CD8-positive, alpha-beta T cell (primary cell): ENCODE measurements at regions of chr14 and their contacts with region 1.

Region 1: GRCh38 chr14:74905375-74906142 is 17.5 kb downstream of the RPS6KL1 start:
- DNase-seq: peak; percentile 58 to 89 (median 81)
- ATAC-seq: peak; percentile 82
- H3K4me3 ChIP-seq: no peak overlapping the region
- H3K4me3 Mint-ChIP-seq: no peak overlapping the region
- H3K27ac ChIP-seq: peak overlapping the region in 1 of 2 experiments; percentile 3
- H3K27ac Mint-ChIP-seq: peak overlapping the region; percentile 55
- H3K4me1 ChIP-seq: peaks cover 5% of the 10 kb centered on the region
- H3K4me1 Mint-ChIP-seq: peaks cover 7% of the 10 kb centered on the region
- H3K27me3 ChIP-seq: no peaks in the 10 kb centered on the region
- H3K27me3 Mint-ChIP-seq: no peaks in the 10 kb centered on the region
- CTCF ChIP-seq: peak; percentile 89

Region 2: DNA sequence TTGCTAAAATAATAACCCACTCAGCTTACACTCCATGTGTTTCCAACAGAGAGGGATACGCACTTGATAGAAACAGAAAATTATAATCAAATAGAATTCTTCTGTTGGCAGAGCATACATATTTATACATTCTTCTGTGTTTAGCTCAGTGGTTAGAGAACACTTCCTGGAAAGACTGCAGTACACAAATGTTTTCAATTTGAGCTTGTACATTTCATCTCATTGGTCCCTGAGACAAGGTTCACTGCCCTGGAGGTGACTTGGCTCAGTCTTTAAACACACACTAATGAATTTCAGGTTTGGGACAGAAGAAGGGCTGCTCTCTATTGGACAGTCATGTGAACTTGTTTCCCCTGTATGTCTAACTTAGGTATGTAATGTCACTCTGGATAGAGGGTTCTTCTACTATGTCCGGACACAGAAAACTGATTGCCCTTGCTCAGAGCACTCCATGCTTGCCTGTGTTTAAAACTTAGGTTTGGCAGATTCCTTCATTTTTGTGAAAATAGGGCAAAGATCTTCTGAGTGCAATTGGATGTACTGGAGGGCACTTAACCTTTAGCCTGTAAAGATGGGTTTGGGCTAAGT is 52.5 kb before region 1 on chr14:
- CTCF ChIA-PET with region 1: interaction called, 725 read pairs
- POLR2A ChIA-PET with region 1: no interaction called
- intact Hi-C with region 1: no loop called
- DNase-seq: no peak
- ATAC-seq: no peak
- H3K4me3 ChIP-seq: no peak overlapping the region
- H3K4me3 Mint-ChIP-seq: no peak overlapping the region
- H3K27ac ChIP-seq: no peak overlapping the region
- H3K27ac Mint-ChIP-seq: peak overlapping the region; percentile 15
- H3K4me1 ChIP-seq: peaks cover 16% of the 10 kb centered on the region
- H3K4me1 Mint-ChIP-seq: peaks cover 24% of the 10 kb centered on the region
- H3K27me3 ChIP-seq: no peaks in the 10 kb centered on the region
- H3K27me3 Mint-ChIP-seq: no peaks in the 10 kb centered on the region
- CTCF ChIP-seq: no peak

Region 3: GRCh38 chr14:74867673-74868072 is 37.9 kb before region 1 on chr14:
- CTCF ChIA-PET with region 1: interaction called, 725 read pairs
- POLR2A ChIA-PET with region 1: interaction called, 63 read pairs
- intact Hi-C with region 1: no loop called
- DNase-seq: peak in 8 of 9 experiments; percentile 43 to 72 (median 57)
- ATAC-seq: peak; percentile 81
- H3K4me3 ChIP-seq: no peak overlapping the region
- H3K4me3 Mint-ChIP-seq: peak overlapping the region; percentile 48
- H3K27ac ChIP-seq: peak overlapping the region in 1 of 2 experiments; percentile 60
- H3K27ac Mint-ChIP-seq: peak overlapping the region; percentile 82
- H3K4me1 ChIP-seq: peaks cover 25% of the 10 kb centered on the region
- H3K4me1 Mint-ChIP-seq: peaks cover 26% of the 10 kb centered on the region
- H3K27me3 ChIP-seq: no peaks in the 10 kb centered on the region
- H3K27me3 Mint-ChIP-seq: no peaks in the 10 kb centered on the region
- CTCF ChIP-seq: no peak

Region 4: GRCh38 chr14:74893614-74894091 is 11.9 kb before region 1 on chr14:
- CTCF ChIA-PET with region 1: interaction called, 65 read pairs
- POLR2A ChIA-PET with region 1: interaction called, 5 read pairs
- intact Hi-C with region 1: no loop called
- DNase-seq: no peak
- ATAC-seq: no peak
- H3K4me3 ChIP-seq: no peak overlapping the region
- H3K4me3 Mint-ChIP-seq: no peak overlapping the region
- H3K27ac ChIP-seq: no peak overlapping the region
- H3K27ac Mint-ChIP-seq: no peak overlapping the region
- H3K4me1 ChIP-seq: no peaks in the 10 kb centered on the region
- H3K4me1 Mint-ChIP-seq: peaks cover 10% of the 10 kb centered on the region
- H3K27me3 ChIP-seq: no peaks in the 10 kb centered on the region
- H3K27me3 Mint-ChIP-seq: no peaks in the 10 kb centered on the region
- CTCF ChIP-seq: no peak

Region 5: GRCh38 chr14:75088574-75089373 is 183.2 kb after region 1 on chr14:
- CTCF ChIA-PET with region 1: interaction called, 13 read pairs
- POLR2A ChIA-PET with region 1: no interaction called
- intact Hi-C with region 1: loop called in 1 of 2 experiments (anchors 2 kb)
- DNase-seq: peak in 7 of 9 experiments; percentile 29 to 70 (median 47)
- ATAC-seq: peak; percentile 58
- H3K4me3 ChIP-seq: no peak overlapping the region
- H3K4me3 Mint-ChIP-seq: no peak overlapping the region
- H3K27ac ChIP-seq: no peak overlapping the region
- H3K27ac Mint-ChIP-seq: no peak overlapping the region
- H3K4me1 ChIP-seq: no peaks in the 10 kb centered on the region
- H3K4me1 Mint-ChIP-seq: no peaks in the 10 kb centered on the region
- H3K27me3 ChIP-seq: no peaks in the 10 kb centered on the region
- H3K27me3 Mint-ChIP-seq: no peaks in the 10 kb centered on the region
- CTCF ChIP-seq: peak; percentile 72